ENCODE measurements at regions of chr12 and their contacts with region 1.

Region 1: DNA sequence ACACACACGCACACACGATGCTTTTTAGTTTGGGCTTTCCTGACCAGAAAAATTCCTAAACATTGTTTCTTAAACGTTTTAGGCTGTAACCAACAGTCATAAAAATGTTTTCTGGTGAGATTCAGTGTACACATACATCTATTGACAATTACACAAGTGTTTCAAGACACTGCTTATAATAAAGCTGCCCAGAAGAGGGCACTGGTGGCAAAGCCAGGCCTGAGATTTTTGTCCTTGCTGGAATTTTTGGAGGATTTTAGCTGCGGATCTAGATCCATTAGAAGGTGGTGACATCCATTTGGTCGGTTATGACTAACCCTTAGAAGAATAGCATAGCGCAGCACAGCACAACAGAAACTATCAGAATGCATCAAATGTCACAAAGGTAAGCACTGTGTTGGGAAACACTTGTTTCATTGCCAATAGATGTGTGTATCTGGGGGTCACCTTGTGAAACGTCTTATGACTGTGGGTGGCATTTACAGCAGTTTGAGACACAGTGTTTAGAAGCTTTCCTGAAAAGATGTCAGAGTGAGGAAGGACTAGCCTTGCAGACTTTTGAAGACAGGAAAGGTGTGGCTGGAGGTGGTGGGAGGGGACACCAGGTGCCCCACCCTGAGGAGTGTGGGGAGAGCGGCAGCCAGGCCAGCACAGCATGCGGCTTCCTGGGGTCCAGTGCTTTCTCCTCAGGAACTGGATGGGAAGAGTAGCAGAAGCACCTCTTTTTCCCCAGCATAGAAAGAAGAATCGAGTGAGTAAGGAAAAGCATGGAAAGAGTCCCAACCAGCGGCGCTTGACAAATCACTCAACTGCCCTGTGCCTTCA is 54.7 kb upstream of the FKBP4 start:
- DNase-seq: peak in 2 of 6 donors; percentile 13 to 46
- ATAC-seq: peak; percentile 50 to 83 (median 78)
- H3K4me3 ChIP-seq: no peak overlapping the region
- H3K27ac ChIP-seq: no peak overlapping the region
- H3K4me1 ChIP-seq: no peaks in the 10 kb centered on the region
- H3K27me3 ChIP-seq: no peaks in the 10 kb centered on the region
- CTCF ChIP-seq: peak in 3 of 4 donors; percentile 35 to 49 (median 46)

Region 2: DNA sequence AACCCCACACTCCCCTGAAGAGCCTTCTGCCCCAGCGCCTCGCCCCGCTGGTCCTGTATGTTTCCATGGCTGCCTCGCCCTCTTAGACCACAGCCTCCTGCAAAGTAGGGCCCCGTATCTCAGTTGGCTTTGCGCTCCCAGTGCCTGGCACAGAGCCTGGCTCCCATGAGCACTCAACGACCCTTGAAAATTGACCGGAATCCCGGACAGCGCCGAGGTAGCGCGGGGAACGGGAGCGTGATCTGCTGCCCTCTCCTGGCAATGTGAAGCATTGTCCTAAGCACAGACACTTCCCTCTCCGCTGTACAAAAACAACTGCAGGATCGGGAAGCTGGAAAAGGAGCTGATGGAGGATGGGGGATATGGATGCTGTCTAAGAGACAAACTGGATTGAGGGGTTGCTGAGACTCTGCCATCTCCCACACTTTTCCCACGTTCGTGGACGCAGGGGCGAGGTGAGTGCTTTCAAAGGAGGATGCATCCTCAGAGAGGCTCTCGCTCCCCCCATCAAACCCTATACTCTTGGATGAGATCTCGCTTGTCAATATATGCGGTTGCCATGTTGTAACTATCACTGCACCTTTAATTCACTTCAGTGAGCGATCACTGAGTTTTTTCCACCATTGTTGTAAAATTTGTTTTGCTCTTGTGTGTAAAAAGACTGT is 44.0 kb after region 1 on chr12:
- intact Hi-C with region 1: loop called in 2 of 3 experiments (anchors 2 to 5 kb)
- DNase-seq: peak; percentile 48 to 83 (median 70)
- ATAC-seq: peak; percentile 93 to 99 (median 98)
- H3K4me3 ChIP-seq: peak overlapping the region in 2 of 4 donors; percentile 14 to 31
- H3K27ac ChIP-seq: no peak overlapping the region
- H3K4me1 ChIP-seq: peaks cover 0 to 3% (median 0%) of the 10 kb centered on the region in 3 donors
- H3K27me3 ChIP-seq: no peaks in the 10 kb centered on the region
- CTCF ChIP-seq: peak; percentile 79 to 90 (median 86)

Measured in pancreas (tissue), 10 donors.